ENCODE measurements at regions of chr5 and their contacts with region 1.

Region 1: DNA sequence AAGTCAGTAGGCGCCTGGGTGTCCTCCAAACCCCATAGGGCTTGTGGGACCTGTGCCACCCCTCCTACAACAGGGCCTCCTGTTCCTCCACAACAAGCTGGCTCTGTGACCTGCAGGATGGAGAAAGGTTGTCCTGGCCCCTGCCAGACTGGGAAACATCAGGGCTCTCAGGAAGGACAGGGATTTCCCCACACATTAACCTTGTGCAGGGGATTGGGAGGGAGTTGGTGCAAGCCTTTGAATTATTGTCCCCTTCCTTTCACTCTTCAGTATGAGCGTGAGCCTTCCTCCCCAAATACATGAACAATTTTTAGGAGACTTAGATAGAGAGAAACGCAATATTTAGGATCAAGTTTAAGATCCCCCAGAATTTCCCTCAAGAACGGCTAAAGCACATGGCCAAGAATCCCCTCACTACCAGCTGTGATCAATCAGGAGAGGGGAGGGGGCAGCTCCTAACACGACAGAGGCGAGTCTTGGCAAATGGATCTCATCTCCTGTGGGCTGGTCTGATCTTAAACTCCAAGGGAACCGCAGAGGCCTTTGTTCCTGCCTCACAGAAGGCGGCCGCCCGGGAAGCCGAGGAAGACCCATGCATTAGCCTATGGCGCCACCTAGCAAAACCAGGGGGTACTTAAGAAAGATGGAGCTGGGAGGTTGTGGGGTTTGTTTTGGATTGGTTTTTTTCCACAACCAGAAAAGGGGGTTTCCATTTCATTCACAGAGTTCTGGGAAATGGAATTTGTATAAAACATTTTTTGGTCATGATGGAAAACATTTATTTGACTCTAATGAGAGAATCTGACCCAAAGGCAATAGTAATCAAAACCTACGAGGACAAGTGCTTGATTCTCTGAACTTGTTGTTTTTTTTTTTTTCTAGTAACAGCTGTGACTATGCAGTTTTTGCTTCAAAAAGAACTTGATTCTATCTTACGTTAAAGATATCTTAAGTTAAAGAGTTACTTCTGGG is 36.1 kb upstream of the OSMR start:
- DNase-seq: peak; percentile 62
- H3K4me3 ChIP-seq: no peak overlapping the region
- H3K27ac ChIP-seq: no peak overlapping the region
- H3K4me1 ChIP-seq: peaks cover 5% of the 10 kb centered on the region
- H3K27me3 ChIP-seq: no peaks in the 10 kb centered on the region
- CTCF ChIP-seq: peak; percentile 86 to 88

Region 2: DNA sequence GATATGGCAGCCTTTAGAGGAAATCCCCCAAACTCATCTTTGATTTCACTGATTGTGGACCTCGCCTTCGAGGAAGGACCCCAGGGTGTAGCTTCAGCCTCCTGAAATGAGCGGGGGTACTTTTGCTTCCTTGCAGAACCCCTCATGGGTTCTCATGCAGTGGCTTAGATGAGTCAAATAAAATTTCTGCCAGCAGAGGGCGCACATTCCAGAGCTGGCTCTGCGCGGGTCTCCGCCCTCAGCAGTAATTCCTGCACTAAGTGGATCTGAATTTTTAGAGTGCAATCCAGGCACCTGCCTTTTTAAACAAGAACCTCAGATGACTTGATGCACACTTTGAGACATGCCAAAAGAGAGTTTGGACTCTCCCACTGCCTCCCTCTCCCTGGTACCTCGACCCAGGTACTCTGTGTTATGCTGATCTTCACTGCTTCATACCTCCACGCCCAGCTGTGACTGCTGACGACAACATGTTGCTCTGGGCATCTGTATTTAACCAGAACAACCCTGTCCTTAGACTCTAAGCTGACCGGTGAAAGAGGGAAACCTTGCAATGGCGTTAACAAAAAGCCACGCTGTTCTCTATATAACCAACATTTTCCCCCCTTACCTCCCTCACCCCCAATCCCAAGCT is 544.0 kb before region 1 on chr5:
- CTCF ChIA-PET with region 1: interaction called, 6 read pairs
- dilution Hi-C with region 1: no loop called
- in situ Hi-C with region 1: loop called in 1 of 2 experiments (anchors 25 kb)
- intact Hi-C with region 1: loop called (anchors 5 kb)
- DNase-seq: peak; percentile 29
- H3K4me3 ChIP-seq: no peak overlapping the region
- H3K27ac ChIP-seq: no peak overlapping the region
- H3K4me1 ChIP-seq: no peaks in the 10 kb centered on the region
- H3K27me3 ChIP-seq: peaks cover 7% of the 10 kb centered on the region
- CTCF ChIP-seq: peak; percentile 73 to 81

Region 3: GRCh38 chr5:38420691-38421390 is 388.8 kb before region 1 on chr5:
- CTCF ChIA-PET with region 1: interaction called, 14 read pairs
- dilution Hi-C with region 1: no loop called
- in situ Hi-C with region 1: no loop called
- intact Hi-C with region 1: loop called (anchors 1 kb)
- DNase-seq: peak; percentile 57
- H3K4me3 ChIP-seq: no peak overlapping the region
- H3K27ac ChIP-seq: no peak overlapping the region
- H3K4me1 ChIP-seq: no peaks in the 10 kb centered on the region
- H3K27me3 ChIP-seq: no peaks in the 10 kb centered on the region
- CTCF ChIP-seq: peak; percentile 83 to 91

Region 4: GRCh38 chr5:38441453-38442246 is 368.0 kb before region 1 on chr5:
- CTCF ChIA-PET with region 1: interaction called, 31 read pairs
- dilution Hi-C with region 1: loop called (anchors 5 kb)
- in situ Hi-C with region 1: loop called (anchors 5 to 10 kb)
- intact Hi-C with region 1: loop called (anchors 1 kb)
- DNase-seq: peak; percentile 73
- H3K4me3 ChIP-seq: no peak overlapping the region
- H3K27ac ChIP-seq: no peak overlapping the region
- H3K4me1 ChIP-seq: no peaks in the 10 kb centered on the region
- H3K27me3 ChIP-seq: no peaks in the 10 kb centered on the region
- CTCF ChIP-seq: peak; percentile 98

Region 5: DNA sequence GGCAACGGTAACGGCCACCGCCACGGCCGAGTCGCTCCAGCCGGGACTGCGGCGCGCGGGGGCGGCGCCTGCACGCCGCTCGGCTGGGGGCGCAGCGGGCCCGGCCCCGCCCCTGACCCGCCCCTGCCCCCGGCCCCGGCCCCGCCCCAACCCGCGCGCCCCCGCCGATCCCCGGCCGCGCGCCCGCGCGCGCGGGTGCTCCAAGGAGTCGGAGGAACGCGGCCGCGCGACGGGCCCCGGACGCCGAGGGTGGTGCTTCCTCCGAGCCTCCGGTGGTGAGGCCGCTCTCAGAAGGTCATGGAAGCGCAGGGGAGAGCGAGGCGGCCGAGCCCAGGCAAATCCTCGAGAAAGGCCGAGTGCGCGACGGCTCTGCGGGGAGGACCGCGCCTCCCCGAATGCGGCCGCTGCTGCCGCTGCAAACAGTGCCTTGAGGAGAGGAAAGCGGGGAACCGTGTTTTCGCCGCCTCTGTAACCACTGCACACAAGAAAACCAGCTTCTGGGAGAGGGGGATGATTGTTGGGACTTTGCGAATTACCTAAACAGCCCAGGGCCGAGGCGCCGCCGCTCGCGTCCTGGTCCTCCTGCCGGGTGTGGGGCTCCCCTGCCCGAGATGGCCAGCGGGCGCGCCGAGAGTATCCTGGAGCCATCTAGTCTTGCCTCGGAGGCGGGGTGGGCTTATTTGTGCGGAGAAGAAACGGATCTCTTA is 252.9 kb before region 1 on chr5 and contains the start of gene LIFR:
- CTCF ChIA-PET with region 1: no interaction called
- dilution Hi-C with region 1: no loop called
- in situ Hi-C with region 1: loop called in 1 of 2 experiments (anchors 25 kb)
- intact Hi-C with region 1: loop called (anchors 1 kb)
- DNase-seq: peak; percentile 79
- H3K4me3 ChIP-seq: peak within 1 kb of the TSS; percentile 60 to 94 (median 89)
- H3K27ac ChIP-seq: peak within 1 kb of the TSS; percentile 64
- H3K4me1 ChIP-seq: peaks cover 11% of the 10 kb centered on the region
- H3K27me3 ChIP-seq: peaks cover 1% of the 10 kb centered on the region
- CTCF ChIP-seq: no peak
- total RNA-seq, gene LIFR: 4.4 to 26.3 TPM

Region 6: GRCh38 chr5:38598994-38599611 is 210.6 kb before region 1 on chr5:
- CTCF ChIA-PET with region 1: no interaction called
- dilution Hi-C with region 1: no loop called
- in situ Hi-C with region 1: no loop called
- intact Hi-C with region 1: no loop called
- DNase-seq: peak; percentile 75
- H3K4me3 ChIP-seq: no peak overlapping the region
- H3K27ac ChIP-seq: no peak overlapping the region
- H3K4me1 ChIP-seq: peaks cover 41% of the 10 kb centered on the region
- H3K27me3 ChIP-seq: no peaks in the 10 kb centered on the region
- CTCF ChIP-seq: no peak

Region 7: DNA sequence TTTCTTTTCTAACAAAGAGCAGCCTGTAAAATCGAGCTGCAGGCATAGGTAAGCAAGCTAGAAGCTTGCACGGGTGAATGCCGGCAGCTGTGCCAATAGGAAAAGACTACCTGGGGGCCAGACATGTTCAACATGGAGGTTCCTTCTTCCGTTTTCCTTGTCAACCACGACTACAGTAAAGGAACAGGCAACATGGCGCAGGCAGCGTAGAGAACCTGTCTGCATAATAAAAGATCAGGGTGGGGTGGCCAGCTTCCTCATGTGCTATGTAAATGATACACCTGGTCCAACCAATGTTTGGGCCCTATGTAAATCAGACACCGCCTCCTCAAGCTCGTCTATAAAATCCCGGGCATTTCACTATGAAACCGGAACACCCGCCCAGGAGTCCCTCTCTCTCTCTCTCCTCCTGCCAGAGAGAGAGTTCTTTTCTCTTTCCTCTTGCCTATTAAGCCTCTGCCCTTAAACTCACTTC is 149.4 kb before region 1 on chr5:
- CTCF ChIA-PET with region 1: no interaction called
- dilution Hi-C with region 1: no loop called
- in situ Hi-C with region 1: no loop called
- intact Hi-C with region 1: no loop called
- DNase-seq: no peak
- H3K4me3 ChIP-seq: no peak overlapping the region
- H3K27ac ChIP-seq: no peak overlapping the region
- H3K4me1 ChIP-seq: no peaks in the 10 kb centered on the region
- H3K27me3 ChIP-seq: peaks cover 5% of the 10 kb centered on the region
- CTCF ChIP-seq: no peak

Region 8: GRCh38 chr5:38714240-38714639 is 95.4 kb before region 1 on chr5:
- CTCF ChIA-PET with region 1: no interaction called
- dilution Hi-C with region 1: no loop called
- in situ Hi-C with region 1: no loop called
- intact Hi-C with region 1: no loop called
- DNase-seq: no peak
- H3K4me3 ChIP-seq: no peak overlapping the region
- H3K27ac ChIP-seq: no peak overlapping the region
- H3K4me1 ChIP-seq: no peaks in the 10 kb centered on the region
- H3K27me3 ChIP-seq: peaks cover 5% of the 10 kb centered on the region
- CTCF ChIP-seq: no peak

Region 9: GRCh38 chr5:38724301-38725030 is 85.2 kb before region 1 on chr5:
- CTCF ChIA-PET with region 1: no interaction called
- dilution Hi-C with region 1: loop called (anchors 5 kb)
- in situ Hi-C with region 1: no loop called
- intact Hi-C with region 1: no loop called
- DNase-seq: no peak
- H3K4me3 ChIP-seq: no peak overlapping the region
- H3K27ac ChIP-seq: no peak overlapping the region
- H3K4me1 ChIP-seq: no peaks in the 10 kb centered on the region
- H3K27me3 ChIP-seq: peaks cover 7% of the 10 kb centered on the region
- CTCF ChIP-seq: no peak

Region 10: DNA sequence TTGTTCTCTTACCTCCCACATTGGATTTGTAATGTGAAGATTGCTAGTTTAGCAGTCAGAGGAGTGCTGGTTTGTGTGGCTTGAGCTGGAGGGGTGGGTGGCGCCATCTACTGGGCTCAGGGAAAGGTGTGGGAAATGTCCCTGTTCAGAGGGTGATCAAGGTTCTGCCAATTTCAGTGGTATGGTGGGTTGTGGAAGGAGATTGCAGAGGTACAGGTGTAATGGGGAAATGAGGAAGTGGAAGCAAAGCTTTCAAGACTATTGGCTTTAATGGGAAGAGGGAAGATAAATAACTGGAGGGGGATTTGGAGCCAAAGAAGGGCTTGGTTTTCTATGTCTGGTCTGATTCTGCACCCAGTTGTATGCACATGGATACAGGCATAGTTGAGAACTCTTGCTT is 112.5 kb after region 1 on chr5:
- CTCF ChIA-PET with region 1: no interaction called
- dilution Hi-C with region 1: no loop called
- in situ Hi-C with region 1: no loop called
- intact Hi-C with region 1: loop called (anchors 2 kb)
- DNase-seq: peak; percentile 33
- H3K4me3 ChIP-seq: no peak overlapping the region
- H3K27ac ChIP-seq: no peak overlapping the region
- H3K4me1 ChIP-seq: no peaks in the 10 kb centered on the region
- H3K27me3 ChIP-seq: no peaks in the 10 kb centered on the region
- CTCF ChIP-seq: peak; percentile 91

Region 11: GRCh38 chr5:39024884-39025283 is 215.2 kb after region 1 on chr5:
- CTCF ChIA-PET with region 1: no interaction called
- dilution Hi-C with region 1: no loop called
- in situ Hi-C with region 1: no loop called
- intact Hi-C with region 1: no loop called
- DNase-seq: peak; percentile 56
- H3K4me3 ChIP-seq: no peak overlapping the region
- H3K27ac ChIP-seq: no peak overlapping the region
- H3K4me1 ChIP-seq: peaks cover 4% of the 10 kb centered on the region
- H3K27me3 ChIP-seq: no peaks in the 10 kb centered on the region
- CTCF ChIP-seq: no peak